ENCODE measurements at regions of chr2 and their contacts with region 1.

Region 1: DNA sequence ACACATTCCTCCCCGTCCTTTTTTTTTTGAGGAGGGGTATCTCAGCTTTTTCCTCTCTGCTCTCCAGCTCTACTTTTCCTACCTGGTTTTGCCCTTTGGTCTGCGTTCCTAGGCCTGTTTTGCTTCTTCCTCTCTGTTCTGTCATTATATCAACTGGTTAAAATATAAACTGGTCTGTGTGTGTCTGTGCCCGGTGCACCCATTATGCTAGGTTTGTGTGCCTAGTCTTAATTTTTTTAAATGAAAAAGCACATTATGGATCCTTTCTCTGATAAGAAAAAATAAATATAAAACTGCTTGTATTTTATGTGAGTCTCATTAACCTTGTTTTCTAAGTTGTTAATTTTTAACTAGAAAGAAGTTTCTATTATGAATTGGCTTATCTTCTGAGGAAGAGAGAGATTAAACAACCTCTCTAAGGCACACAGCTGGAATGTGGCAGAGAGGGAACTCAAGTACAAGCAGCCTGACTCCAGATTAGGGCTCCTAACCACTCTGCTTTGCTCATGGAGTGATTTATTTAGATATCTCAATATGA is 17.4 kb downstream of the SLC38A11 start:
- DNase-seq: peak; percentile 85
- ATAC-seq: peak; percentile 89
- H3K4me3 ChIP-seq: peak overlapping the region in 2 of 3 experiments; percentile 44 to 50; a peak in 4 of 6 replicates
- H3K27ac ChIP-seq: peak overlapping the region; percentile 69
- H3K4me1 ChIP-seq: peaks cover 64% of the 10 kb centered on the region
- H3K27me3 ChIP-seq: no peaks in the 10 kb centered on the region
- CTCF ChIP-seq: no peak
- EP300 ChIP-seq: peak in 1 of 2 experiments; percentile 51; a peak in 2 of 4 replicates
- POLR2A ChIP-seq: peak in 1 of 2 experiments; percentile 21; a peak in 1 of 4 replicates
- RAD21 ChIP-seq: no peak

Region 2: GRCh38 chr2:164896634-164897355 is 41.1 kb before region 1 on chr2:
- CTCF ChIA-PET with region 1: no interaction called
- POLR2A ChIA-PET with region 1: no interaction called
- in situ Hi-C with region 1: no loop called
- intact Hi-C with region 1: no loop called
- DNase-seq: peak; percentile 63
- ATAC-seq: peak; percentile 69
- H3K4me3 ChIP-seq: no peak overlapping the region
- H3K27ac ChIP-seq: peak overlapping the region; percentile 41
- H3K4me1 ChIP-seq: peaks cover 34% of the 10 kb centered on the region
- H3K27me3 ChIP-seq: no peaks in the 10 kb centered on the region
- CTCF ChIP-seq: no peak
- EP300 ChIP-seq: no peak; a peak in 1 of 4 replicates
- POLR2A ChIP-seq: no peak
- RAD21 ChIP-seq: no peak

Region 3: GRCh38 chr2:164917296-164917903 is 20.5 kb before region 1 on chr2:
- CTCF ChIA-PET with region 1: no interaction called
- POLR2A ChIA-PET with region 1: interaction called, 11 read pairs
- in situ Hi-C with region 1: no loop called
- intact Hi-C with region 1: no loop called
- DNase-seq: peak; percentile 74
- ATAC-seq: peak; percentile 61
- H3K4me3 ChIP-seq: no peak overlapping the region
- H3K27ac ChIP-seq: no peak overlapping the region
- H3K4me1 ChIP-seq: peaks cover 56% of the 10 kb centered on the region
- H3K27me3 ChIP-seq: no peaks in the 10 kb centered on the region
- CTCF ChIP-seq: peak; percentile 90
- EP300 ChIP-seq: 0 out of 4 replicates have a peak, but pooled peaks of 1 of the 2 experiments have one; percentile 5
- POLR2A ChIP-seq: no peak
- RAD21 ChIP-seq: peak; percentile 93

Region 4: GRCh38 chr2:164954954-164955701 is 17.2 kb after region 1 on chr2 and contains the start of gene SLC38A11:
- CTCF ChIA-PET with region 1: no interaction called
- POLR2A ChIA-PET with region 1: interaction called, 3 read pairs
- in situ Hi-C with region 1: no loop called
- intact Hi-C with region 1: loop called (anchors 2 kb)
- DNase-seq: no peak
- ATAC-seq: peak; percentile 95
- H3K4me3 ChIP-seq: peak within 1 kb of the TSS in 2 of 3 experiments; percentile 34 to 39; a peak in 4 of 6 replicates
- H3K27ac ChIP-seq: no peak within 1 kb of the TSS
- H3K4me1 ChIP-seq: no peaks in the 10 kb centered on the region
- H3K27me3 ChIP-seq: no peaks in the 10 kb centered on the region
- CTCF ChIP-seq: peak; percentile 42
- EP300 ChIP-seq: no peak
- POLR2A ChIP-seq: no peak
- RAD21 ChIP-seq: no peak
- total RNA-seq, gene SLC38A11: 9.2 and 14.0 TPM in 2 replicates

Region 5: DNA sequence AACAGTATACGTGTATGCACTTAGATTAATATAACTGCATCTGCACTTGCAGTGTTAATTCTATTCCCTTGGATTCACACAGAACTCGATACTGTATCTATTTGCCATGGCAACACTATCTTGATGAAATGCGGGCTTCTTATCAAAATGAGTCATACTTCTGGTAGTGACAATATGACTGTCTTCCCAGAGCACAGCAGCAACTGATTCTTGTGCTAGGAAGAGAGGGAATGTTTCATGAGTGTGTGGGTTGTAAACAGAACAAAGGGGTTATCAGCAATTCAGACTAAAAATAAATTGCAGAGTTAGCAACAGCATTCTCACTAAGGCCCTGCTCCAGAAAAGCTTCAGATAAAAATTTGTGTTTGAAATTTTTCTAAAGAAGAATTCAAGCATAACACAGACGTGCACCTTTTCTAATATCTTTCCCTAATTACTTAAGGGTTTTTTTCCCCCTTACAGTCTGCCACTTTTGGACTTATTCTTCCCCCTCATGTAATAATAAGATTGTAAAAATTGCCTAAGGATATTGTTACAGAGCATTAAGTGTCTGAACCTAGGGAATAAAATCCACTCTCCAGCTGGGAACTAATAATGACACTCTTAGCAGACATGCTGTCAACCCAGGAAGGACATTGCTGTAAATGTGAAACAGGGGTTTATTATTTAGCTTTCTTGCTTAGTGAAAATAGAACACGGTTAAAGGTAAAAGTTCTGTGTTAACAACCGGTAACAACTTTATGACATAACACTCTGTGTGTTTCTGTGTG is 117.3 kb after region 1 on chr2:
- CTCF ChIA-PET with region 1: no interaction called
- POLR2A ChIA-PET with region 1: no interaction called
- in situ Hi-C with region 1: no loop called
- intact Hi-C with region 1: no loop called
- DNase-seq: no peak
- ATAC-seq: no peak
- H3K4me3 ChIP-seq: no peak overlapping the region
- H3K27ac ChIP-seq: no peak overlapping the region
- H3K4me1 ChIP-seq: no peaks in the 10 kb centered on the region
- H3K27me3 ChIP-seq: no peaks in the 10 kb centered on the region
- CTCF ChIP-seq: no peak
- EP300 ChIP-seq: no peak
- POLR2A ChIP-seq: no peak
- RAD21 ChIP-seq: no peak